Calu3 (cell line): ENCODE measurements at regions of chr2 and their contacts with region 1.

Region 1: GRCh38 chr2:26469092-26469710 is 8.7 kb downstream of the OTOF start:
- DNase-seq: peak; percentile 72
- H3K4me3 Mint-ChIP-seq: no peak overlapping the region
- H3K27ac Mint-ChIP-seq: no peak overlapping the region
- H3K4me1 Mint-ChIP-seq: no peaks in the 10 kb centered on the region
- H3K27me3 Mint-ChIP-seq: no peaks in the 10 kb centered on the region
- CTCF ChIP-seq: peak; percentile 89

Region 2: GRCh38 chr2:26316041-26316440 is 153.2 kb before region 1 on chr2:
- CTCF ChIA-PET with region 1: no interaction called
- intact Hi-C with region 1: loop called (anchors 5 kb)
- DNase-seq: peak; percentile 47
- H3K4me3 Mint-ChIP-seq: no peak overlapping the region
- H3K27ac Mint-ChIP-seq: no peak overlapping the region
- H3K4me1 Mint-ChIP-seq: no peaks in the 10 kb centered on the region
- H3K27me3 Mint-ChIP-seq: peaks cover 47% of the 10 kb centered on the region
- CTCF ChIP-seq: peak; percentile 35

Region 3: DNA sequence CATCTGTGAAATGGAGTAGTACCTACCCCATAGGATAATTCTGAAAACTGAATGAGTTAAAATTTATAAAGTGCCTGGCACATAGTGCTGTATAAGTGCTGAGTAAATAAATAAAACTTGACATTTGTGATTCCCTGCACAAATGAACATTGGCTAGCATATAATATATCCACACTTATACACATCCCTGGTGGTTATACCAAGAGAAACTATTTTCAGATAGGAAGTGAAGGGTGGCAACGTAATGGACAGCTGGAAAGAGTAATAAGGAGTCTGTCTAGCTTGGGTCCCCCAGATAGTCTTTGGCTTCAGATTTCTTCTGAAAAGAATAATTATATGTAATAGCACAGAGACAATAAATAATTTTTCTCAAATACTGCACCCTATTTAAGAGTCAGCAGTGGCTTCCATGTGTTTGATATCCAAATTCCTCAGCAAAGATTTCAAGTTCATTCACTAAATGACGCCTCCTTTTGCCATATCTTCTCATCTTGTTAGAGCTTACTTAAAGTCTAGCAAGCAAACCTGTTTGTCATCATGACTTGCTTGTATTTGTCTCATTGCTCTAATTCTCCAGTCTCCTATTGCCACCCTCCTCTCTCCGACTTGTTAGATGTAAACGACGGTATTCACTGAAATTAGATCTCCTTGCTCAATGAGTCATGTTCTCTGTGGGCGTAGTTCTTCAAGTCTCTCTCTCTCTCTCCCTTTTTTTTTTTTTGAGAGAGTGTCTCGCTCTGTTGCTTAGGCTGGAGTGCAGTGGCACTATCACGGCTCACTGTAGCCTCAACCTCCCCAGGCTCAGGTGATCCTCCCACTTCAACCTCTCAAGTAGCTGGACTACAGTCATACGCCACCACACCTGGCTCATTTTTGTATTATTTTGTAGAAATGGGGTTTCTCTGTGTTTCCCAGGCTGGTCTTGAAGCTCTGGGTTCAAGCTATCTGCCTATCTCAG is 113.9 kb before region 1 on chr2:
- CTCF ChIA-PET with region 1: no interaction called
- intact Hi-C with region 1: loop called (anchors 10 kb)
- DNase-seq: peak; percentile 44
- H3K4me3 Mint-ChIP-seq: peak overlapping the region; percentile 29
- H3K27ac Mint-ChIP-seq: peak overlapping the region; percentile 78
- H3K4me1 Mint-ChIP-seq: peaks cover 77% of the 10 kb centered on the region
- H3K27me3 Mint-ChIP-seq: no peaks in the 10 kb centered on the region
- CTCF ChIP-seq: no peak